Activated CD4-positive, alpha-beta T cell treated with anti-CD3 and anti-CD28 coated beads, Interleukin-2, amount 10 ng/mL, durations not matched to agents 7 days and 5 days (primary cell): ENCODE measurements at regions of chr7 and their contacts with region 1.

Region 1: GRCh38 chr7:1544178-1544895 is 11.7 kb downstream of the TMEM184A start:
- DNase-seq: no peak
- H3K4me3 Mint-ChIP-seq: no peak overlapping the region
- H3K27ac Mint-ChIP-seq: no peak overlapping the region
- H3K4me1 Mint-ChIP-seq: peaks cover 3% of the 10 kb centered on the region
- H3K27me3 Mint-ChIP-seq: no peaks in the 10 kb centered on the region

Region 2: DNA sequence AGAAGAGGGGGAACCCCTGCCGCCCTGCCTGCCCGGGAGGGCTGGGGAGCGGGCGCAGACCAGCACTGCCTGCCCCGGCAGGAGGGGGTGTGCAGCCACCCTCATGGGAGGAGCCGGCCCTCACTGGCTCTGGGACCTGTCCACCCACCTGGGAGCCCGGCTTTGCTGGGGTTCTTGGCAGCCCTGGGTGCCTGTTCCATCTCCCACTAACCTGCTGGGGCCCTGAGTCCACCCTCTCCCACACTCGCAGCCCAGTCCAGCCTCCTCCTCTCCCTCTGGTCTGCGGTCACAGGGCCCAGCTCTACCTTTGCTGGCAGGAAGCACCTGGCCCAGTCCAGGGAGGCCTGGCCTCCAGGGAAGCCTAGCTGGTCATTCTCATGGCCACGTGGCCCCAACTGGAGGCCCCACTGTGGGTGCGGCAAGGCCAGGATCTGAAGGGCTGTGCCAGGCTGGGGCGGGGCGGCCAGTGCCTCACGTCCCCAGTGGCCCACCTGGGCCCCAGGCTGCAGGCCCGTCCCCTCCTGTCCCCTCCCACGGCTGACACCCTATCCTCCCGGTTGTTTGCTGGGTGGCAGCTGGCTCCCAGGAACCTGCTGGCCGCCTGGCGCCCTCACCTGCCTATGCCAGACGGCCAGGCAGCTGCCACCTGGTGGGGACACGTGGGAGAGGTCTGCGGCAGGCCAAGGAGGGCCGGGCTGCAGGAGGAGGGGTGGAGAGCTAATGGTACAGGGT is 11.6 kb after region 1 on chr7 and contains the start of gene TMEM184A:
- CTCF ChIA-PET with region 1: interaction called, 12 read pairs
- POLR2A ChIA-PET with region 1: no interaction called
- DNase-seq: peak; percentile 57
- H3K4me3 Mint-ChIP-seq: no peak within 1 kb of the TSS
- H3K27ac Mint-ChIP-seq: no peak within 1 kb of the TSS
- H3K4me1 Mint-ChIP-seq: peaks cover 3% of the 10 kb centered on the region
- H3K27me3 Mint-ChIP-seq: no peaks in the 10 kb centered on the region
- total RNA-seq, gene TMEM184A: not detected

Region 3: DNA sequence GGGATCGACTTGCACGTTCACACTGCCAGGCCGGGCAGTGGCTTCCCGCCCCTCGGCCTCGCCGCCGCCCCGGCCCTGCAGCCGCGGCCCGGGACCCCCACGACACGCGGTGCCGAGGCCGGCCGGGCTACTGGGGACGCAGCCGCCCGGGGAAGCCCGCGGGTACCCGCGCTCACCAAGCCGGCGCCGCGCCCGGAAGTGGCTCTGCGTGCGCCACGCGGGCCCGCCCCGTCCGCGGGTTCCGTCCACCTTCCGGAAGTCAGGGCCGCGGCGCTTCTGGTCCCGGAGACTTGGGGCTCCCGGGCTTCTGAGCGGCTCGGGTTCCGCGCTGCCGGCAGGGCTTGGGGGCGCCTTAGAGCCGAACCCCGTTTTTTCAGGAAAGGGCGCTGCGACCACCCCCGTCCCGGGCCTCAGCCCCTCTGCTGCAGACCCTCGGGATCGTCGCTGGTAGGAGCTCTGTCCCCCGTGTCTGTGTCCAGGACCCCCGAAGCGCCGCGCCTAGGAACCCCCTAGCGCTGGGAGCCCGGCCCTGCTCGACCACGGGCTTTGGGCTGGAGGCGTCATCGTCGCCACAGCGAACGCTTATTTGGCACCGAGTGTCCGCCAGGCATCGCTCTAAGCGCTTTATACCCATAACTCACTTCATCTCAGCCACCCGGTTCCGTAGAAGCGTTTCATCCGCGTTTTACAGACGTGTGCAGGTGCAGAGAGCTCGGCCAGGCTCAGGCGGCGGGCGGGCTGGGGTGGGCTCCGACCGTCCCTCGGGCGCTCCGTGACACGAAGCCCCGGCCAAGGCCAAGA is 25.7 kb after region 1 on chr7 and contains the start of gene PSMG3:
- CTCF ChIA-PET with region 1: no interaction called
- POLR2A ChIA-PET with region 1: no interaction called
- DNase-seq: peak; percentile 89
- H3K4me3 Mint-ChIP-seq: peak within 1 kb of the TSS; percentile 86
- H3K27ac Mint-ChIP-seq: peak within 1 kb of the TSS; percentile 95
- H3K4me1 Mint-ChIP-seq: peaks cover 35% of the 10 kb centered on the region
- H3K27me3 Mint-ChIP-seq: no peaks in the 10 kb centered on the region
- total RNA-seq, gene PSMG3: 23.1 to 29.3 TPM